HCT116 (cell line): ENCODE measurements at regions of chr4 and their contacts with region 1.

Region 1: GRCh38 chr4:71732706-71733105 is 51.2 kb downstream of the GC start:
- DNase-seq: no peak
- ATAC-seq: no peak
- H3K4me3 ChIP-seq: no peak overlapping the region
- H3K27ac ChIP-seq: no peak overlapping the region
- H3K4me1 ChIP-seq: no peaks in the 10 kb centered on the region
- H3K27me3 ChIP-seq: no peaks in the 10 kb centered on the region
- CTCF ChIP-seq: peak; percentile 8 to 45 (median 18); a peak in 3 of 6 replicates
- POLR2A ChIP-seq: no peak
- RAD21 ChIP-seq: peak; percentile 41

Region 2: GRCh38 chr4:72302981-72303704 is 570.4 kb after region 1 on chr4:
- CTCF ChIA-PET with region 1: no interaction called
- POLR2A ChIA-PET with region 1: no interaction called
- RAD21 ChIA-PET with region 1: no interaction called
- intact Hi-C with region 1: loop called (anchors 5 kb)
- DNase-seq: peak; percentile 6
- ATAC-seq: peak; percentile 75
- H3K4me3 ChIP-seq: no peak overlapping the region
- H3K27ac ChIP-seq: no peak overlapping the region
- H3K4me1 ChIP-seq: no peaks in the 10 kb centered on the region
- H3K27me3 ChIP-seq: no peaks in the 10 kb centered on the region
- CTCF ChIP-seq: peak; percentile 12 to 69 (median 51); a peak in 5 of 6 replicates
- POLR2A ChIP-seq: no peak
- RAD21 ChIP-seq: peak; percentile 38; the same call in 1 of the 2 replicates